ENCODE measurements at regions of chr7 and their contacts with region 1.

Region 1: DNA sequence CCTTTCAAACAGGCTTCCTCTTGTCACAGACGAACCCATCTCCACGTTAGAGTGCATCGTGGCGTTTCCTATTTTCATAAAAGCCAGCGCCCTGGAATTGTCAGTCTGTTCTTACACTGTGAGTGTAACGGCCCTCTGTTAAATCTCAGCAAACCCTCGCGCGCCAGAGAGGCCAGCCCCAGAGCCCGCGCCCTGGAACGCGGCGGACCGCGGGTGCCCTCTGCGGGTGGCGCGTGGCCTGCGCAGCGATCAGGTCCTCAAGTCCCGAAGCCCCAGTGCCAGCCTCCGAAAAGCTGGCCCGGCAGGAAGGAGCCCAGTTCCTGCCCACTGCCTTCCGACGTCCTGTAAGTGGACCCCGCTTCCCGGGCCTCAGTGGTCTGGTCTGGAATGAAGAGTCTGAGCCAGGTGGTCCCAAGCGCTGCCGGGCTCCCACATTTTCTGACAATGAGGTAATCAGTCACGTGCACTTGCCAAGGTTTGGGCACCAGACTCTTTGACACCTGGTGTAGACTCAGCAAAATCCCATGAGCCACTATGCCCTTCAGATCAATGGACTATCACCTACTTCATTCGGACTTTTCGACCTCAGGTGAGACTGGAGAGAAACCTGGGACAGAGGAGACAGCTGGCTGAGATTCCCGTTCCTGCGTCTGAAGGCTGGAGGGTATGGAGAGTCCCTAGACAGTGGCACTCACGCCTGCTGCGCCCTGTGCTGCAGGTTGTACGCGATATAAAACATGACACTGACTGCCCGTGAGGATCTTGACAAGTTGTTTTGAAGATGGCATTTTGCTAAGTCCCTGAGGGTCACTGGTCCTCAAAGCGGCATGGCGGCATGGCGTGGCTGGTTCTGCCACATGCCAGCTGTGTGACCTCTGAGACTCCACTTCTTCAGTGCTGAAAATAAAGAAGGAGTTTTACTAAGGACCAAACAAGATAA is 109.4 kb upstream of the LANCL2 start:
- DNase-seq: peak; percentile 75
- H3K4me3 ChIP-seq: peak overlapping the region; percentile 25 to 60 (median 54)
- H3K27ac ChIP-seq: no peak overlapping the region
- H3K4me1 ChIP-seq: peaks cover 16% of the 10 kb centered on the region
- H3K27me3 ChIP-seq: no peaks in the 10 kb centered on the region
- CTCF ChIP-seq: peak; percentile 83 to 95

Region 2: GRCh38 chr7:54773472-54774399 is 482.0 kb before region 1 on chr7:
- CTCF ChIA-PET with region 1: interaction called, 3 read pairs
- dilution Hi-C with region 1: loop called (anchors 25 kb)
- in situ Hi-C with region 1: loop called (anchors 5 kb)
- intact Hi-C with region 1: loop called (anchors 1 kb)
- DNase-seq: peak; percentile 78
- H3K4me3 ChIP-seq: peak overlapping the region; percentile 9 to 33 (median 14)
- H3K27ac ChIP-seq: peak overlapping the region; percentile 50
- H3K4me1 ChIP-seq: peaks cover 16% of the 10 kb centered on the region
- H3K27me3 ChIP-seq: no peaks in the 10 kb centered on the region
- CTCF ChIP-seq: peak; percentile 90 to 94

Region 3: DNA sequence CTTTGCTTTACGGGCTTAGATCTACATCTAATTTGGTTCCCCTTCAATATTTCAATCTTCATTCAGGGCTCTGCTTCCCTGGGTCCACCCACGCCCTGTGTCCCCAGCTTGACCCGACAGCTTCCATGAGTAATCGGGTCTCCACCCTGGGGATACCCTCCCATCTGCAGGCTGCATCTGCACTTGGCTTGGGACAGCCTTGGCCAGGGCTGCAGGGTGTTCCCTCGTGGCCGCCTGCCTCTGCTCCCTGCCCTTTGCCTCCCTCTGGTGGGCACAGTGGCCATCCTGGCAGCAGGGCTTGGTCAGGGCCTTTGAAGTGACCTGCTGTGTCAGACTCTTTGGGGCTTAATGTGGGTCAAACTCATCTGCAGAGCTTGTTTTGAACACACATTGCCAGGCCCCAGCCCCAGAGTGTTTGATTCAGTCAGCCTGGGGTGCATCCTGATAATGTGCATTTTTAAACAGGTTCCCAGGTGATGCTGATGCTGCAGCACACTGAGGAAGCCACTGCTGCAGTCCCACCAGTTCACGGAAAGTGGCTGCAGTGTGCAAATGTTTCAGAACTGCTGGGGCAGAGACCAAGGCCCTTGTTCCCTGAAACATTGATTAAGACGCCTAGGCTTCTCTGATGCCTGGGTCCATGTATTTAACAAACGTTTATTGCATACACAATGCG is 416.1 kb before region 1 on chr7:
- CTCF ChIA-PET with region 1: interaction called, 3 read pairs
- dilution Hi-C with region 1: no loop called
- in situ Hi-C with region 1: no loop called
- intact Hi-C with region 1: loop called (anchors 2 kb)
- DNase-seq: peak; percentile 73
- H3K4me3 ChIP-seq: no peak overlapping the region
- H3K27ac ChIP-seq: no peak overlapping the region
- H3K4me1 ChIP-seq: peaks cover 17% of the 10 kb centered on the region
- H3K27me3 ChIP-seq: no peaks in the 10 kb centered on the region
- CTCF ChIP-seq: peak; percentile 82 to 89

Region 4: DNA sequence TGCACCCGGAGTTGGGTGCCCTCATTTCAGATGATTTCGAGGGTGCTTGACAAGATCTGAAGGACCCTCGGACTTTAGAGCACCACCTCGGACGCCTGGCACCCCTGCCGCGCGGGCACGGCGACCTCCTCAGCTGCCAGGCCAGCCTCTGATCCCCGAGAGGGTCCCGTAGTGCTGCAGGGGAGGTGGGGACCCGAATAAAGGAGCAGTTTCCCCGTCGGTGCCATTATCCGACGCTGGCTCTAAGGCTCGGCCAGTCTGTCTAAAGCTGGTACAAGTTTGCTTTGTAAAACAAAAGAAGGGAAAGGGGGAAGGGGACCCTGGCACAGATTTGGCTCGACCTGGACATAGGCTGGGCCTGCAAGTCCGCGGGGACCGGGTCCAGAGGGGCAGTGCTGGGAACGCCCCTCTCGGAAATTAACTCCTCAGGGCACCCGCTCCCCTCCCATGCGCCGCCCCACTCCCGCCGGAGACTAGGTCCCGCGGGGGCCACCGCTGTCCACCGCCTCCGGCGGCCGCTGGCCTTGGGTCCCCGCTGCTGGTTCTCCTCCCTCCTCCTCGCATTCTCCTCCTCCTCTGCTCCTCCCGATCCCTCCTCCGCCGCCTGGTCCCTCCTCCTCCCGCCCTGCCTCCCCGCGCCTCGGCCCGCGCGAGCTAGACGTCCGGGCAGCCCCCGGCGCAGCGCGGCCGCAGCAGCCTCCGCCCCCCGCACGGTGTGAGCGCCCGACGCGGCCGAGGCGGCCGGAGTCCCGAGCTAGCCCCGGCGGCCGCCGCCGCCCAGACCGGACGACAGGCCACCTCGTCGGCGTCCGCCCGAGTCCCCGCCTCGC is 237.2 kb before region 1 on chr7 and contains the start of gene EGFR:
- CTCF ChIA-PET with region 1: no interaction called
- dilution Hi-C with region 1: no loop called
- in situ Hi-C with region 1: no loop called
- intact Hi-C with region 1: loop called (anchors 2 kb)
- DNase-seq: peak; percentile 80
- H3K4me3 ChIP-seq: peak within 1 kb of the TSS; percentile 62 to 83 (median 67)
- H3K27ac ChIP-seq: peak within 1 kb of the TSS; percentile 85
- H3K4me1 ChIP-seq: peaks cover 34% of the 10 kb centered on the region
- H3K27me3 ChIP-seq: no peaks in the 10 kb centered on the region
- CTCF ChIP-seq: no peak
- total RNA-seq, gene EGFR: 304 to 534 TPM

Region 5: GRCh38 chr7:55185941-55186609 is 69.7 kb before region 1 on chr7:
- CTCF ChIA-PET with region 1: no interaction called
- dilution Hi-C with region 1: no loop called
- in situ Hi-C with region 1: no loop called
- intact Hi-C with region 1: loop called (anchors 2 kb)
- DNase-seq: peak; percentile 97
- H3K4me3 ChIP-seq: no peak overlapping the region
- H3K27ac ChIP-seq: peak overlapping the region; percentile 44
- H3K4me1 ChIP-seq: peaks cover 31% of the 10 kb centered on the region
- H3K27me3 ChIP-seq: no peaks in the 10 kb centered on the region
- CTCF ChIP-seq: no peak

Region 6: GRCh38 chr7:55288070-55288824 is 32.5 kb after region 1 on chr7:
- CTCF ChIA-PET with region 1: interaction called, 25 read pairs
- dilution Hi-C with region 1: no loop called
- in situ Hi-C with region 1: no loop called
- intact Hi-C with region 1: no loop called
- DNase-seq: no peak
- H3K4me3 ChIP-seq: no peak overlapping the region
- H3K27ac ChIP-seq: no peak overlapping the region
- H3K4me1 ChIP-seq: no peaks in the 10 kb centered on the region
- H3K27me3 ChIP-seq: peaks cover 12% of the 10 kb centered on the region
- CTCF ChIP-seq: peak in 1 of 2 donors; percentile 18